PC-9 (cell line): ENCODE measurements at regions of chr5 and their contacts with region 1.

Region 1: DNA sequence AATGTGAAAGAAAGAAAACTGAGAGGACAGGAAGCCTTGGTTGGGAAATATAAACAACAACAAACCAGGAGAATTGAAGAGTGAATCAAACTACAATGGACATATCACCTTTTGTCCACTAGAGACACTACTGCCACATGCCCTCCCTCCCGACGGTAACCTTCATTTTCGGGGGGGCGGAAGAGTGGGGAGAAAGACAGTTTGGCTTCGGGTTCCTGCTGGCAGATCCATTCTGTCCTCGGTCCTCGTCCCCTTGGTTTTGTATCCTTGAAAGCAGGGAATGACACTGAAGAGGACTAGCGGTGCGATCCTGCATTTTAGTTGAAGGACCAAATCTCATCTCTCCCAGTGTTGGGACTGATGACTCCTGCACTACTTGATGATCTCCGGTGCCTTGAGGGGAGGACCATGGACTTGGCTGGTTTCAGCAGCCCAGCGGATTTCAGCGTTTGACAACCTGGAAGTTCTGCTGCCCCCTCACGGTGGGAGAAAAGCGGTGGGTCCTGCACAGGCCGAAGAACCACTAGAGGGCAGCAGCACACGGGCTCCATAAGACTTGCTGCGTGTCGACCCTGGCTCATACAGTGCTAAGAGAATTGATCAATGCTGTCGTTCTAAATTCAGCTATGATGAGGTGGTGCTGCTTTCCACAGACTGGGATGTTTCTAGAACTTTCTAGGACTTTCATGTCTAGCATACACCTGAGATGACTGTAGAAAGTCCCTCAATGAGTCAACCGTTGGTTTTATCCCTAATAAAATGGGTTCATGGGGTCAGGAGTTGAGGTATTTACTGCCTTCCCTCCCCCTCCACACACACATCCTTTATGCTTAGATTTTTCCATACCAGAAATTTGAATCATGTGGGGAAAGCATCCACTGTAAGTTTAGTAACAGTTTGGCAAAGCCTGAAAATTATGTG is 15.1 kb upstream of the ZNF131 start:
- DNase-seq: peak; percentile 90 to 96
- H3K4me3 ChIP-seq: peak overlapping the region; percentile 51
- H3K27ac ChIP-seq: no peak overlapping the region
- H3K4me1 ChIP-seq: peaks cover 8% of the 10 kb centered on the region; the same call in 1 of the 2 replicates
- H3K27me3 ChIP-seq: no peaks in the 10 kb centered on the region
- CTCF ChIP-seq: peak; percentile 100

Region 2: GRCh38 chr5:43040287-43041098 is 65.1 kb before region 1 on chr5 and contains the start of gene ANXA2R:
- CTCF ChIA-PET with region 1: interaction called, 4 read pairs
- POLR2A ChIA-PET with region 1: no interaction called
- intact Hi-C with region 1: loop called (anchors 1 kb)
- DNase-seq: peak; percentile 94 to 97
- H3K4me3 ChIP-seq: peak within 1 kb of the TSS; percentile 76
- H3K27ac ChIP-seq: peak within 1 kb of the TSS; percentile 60
- H3K4me1 ChIP-seq: peaks cover 1% of the 10 kb centered on the region; the same call in 1 of the 2 replicates
- H3K27me3 ChIP-seq: no peaks in the 10 kb centered on the region
- CTCF ChIP-seq: peak; percentile 99
- total RNA-seq, gene ANXA2R: 3.6 and 6.3 TPM in 2 replicates

Region 3: DNA sequence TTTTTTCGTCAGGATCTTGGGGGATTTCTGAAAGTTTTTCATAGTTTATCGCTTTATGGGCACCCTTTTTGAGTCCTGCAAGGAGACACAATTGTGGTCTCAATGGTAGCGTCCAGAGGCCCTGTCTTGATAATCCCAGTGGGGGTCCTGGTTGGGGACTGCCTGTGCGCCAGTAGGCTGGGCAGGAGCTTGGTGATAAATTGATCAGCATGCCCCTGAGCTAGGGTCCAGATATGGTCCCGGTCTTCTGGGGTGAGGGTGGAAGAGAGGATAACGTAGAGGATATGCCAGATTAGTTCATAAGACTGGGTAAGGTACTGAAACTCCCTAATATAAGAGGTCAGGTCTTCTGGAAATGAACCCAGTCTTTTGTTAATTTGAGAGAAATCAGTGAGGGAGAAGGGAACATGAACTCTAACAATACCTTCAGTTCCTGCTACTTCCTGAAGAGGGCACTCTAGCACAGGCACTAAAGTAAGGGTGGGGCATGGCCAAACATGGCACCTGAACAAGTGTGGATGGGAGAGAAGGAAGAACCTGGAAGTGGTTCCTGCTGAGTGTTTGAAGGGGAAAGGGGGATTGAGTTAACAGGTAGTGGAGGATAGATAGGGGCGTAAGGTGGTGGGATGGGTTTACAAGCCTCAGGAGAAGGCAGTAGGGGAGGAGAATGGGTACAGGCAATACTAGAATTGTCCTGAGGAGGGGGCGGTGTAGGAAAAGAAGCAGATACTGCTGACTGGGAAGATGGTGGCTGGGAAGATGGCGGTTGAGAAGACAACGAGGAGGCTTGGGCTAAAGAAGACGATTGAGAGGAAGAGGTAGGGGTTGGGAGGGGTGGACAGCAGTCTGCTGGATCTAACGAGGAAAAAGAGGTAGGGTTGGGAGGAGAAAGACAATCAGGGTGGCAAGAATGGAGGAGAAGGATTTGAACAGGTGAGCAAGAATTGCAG is 31.8 kb before region 1 on chr5:
- CTCF ChIA-PET with region 1: interaction called, 7 read pairs
- POLR2A ChIA-PET with region 1: no interaction called
- intact Hi-C with region 1: loop called (anchors 2 kb)
- DNase-seq: peak in 1 of 2 experiments; percentile 55
- H3K4me3 ChIP-seq: no peak overlapping the region
- H3K27ac ChIP-seq: no peak overlapping the region
- H3K4me1 ChIP-seq: peaks cover 5% of the 10 kb centered on the region
- H3K27me3 ChIP-seq: no peaks in the 10 kb centered on the region
- CTCF ChIP-seq: peak; percentile 97

Region 4: DNA sequence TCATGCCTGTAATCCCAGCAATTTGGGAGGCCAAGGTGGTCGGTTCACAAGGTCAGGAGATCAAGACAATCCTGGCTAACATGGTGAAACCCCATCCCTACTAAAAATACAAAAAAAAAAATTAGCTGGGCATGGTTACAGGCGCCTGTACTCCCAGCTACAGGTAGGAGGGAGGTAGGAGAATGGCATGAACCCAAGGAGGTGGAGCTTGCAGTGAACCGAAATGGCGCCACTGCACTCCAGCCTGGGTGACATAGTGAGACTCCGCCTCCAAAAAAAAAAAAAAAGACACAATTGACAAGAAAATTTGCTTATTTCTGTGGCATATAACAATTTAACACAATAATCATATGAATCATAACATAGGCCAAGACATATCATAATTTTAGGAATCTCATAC is 20.2 kb before region 1 on chr5:
- CTCF ChIA-PET with region 1: interaction called, 4 read pairs
- POLR2A ChIA-PET with region 1: interaction called, 19 read pairs
- intact Hi-C with region 1: no loop called
- DNase-seq: no peak
- H3K4me3 ChIP-seq: no peak overlapping the region
- H3K27ac ChIP-seq: no peak overlapping the region
- H3K4me1 ChIP-seq: no peaks in the 10 kb centered on the region
- H3K27me3 ChIP-seq: no peaks in the 10 kb centered on the region
- CTCF ChIP-seq: no peak

Region 5: GRCh38 chr5:43304525-43304924 is 198.9 kb after region 1 on chr5:
- CTCF ChIA-PET with region 1: no interaction called
- POLR2A ChIA-PET with region 1: no interaction called
- intact Hi-C with region 1: no loop called
- DNase-seq: no peak
- H3K4me3 ChIP-seq: no peak overlapping the region
- H3K27ac ChIP-seq: no peak overlapping the region
- H3K4me1 ChIP-seq: peaks cover 18% of the 10 kb centered on the region
- H3K27me3 ChIP-seq: no peaks in the 10 kb centered on the region
- CTCF ChIP-seq: no peak